ENCODE measurements at regions of chr20 and their contacts with region 1.

Region 1: DNA sequence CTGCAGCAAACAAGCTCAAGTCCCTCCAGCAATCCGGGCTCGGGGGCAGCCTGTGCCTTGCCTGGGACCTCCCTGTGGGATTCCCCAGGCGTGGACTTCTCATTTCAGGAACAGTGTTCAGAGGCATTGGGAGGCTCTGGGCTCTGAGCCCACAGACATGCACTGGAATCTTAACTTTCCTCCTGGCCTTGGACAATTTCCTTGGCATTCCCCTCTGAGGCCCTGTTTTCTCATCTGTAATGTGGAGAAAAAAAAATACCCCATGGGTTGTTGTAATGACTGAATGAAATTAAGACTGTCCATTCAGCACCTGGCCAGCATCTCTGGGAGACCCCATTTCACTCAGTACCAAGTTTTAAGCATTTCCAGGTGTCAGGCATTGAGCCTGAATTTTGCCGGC is 17.6 kb downstream of the BPIFB4 start:
- DNase-seq: no peak
- H3K4me3 ChIP-seq: no peak overlapping the region
- H3K27ac ChIP-seq: no peak overlapping the region
- H3K4me1 ChIP-seq: no peaks in the 10 kb centered on the region
- H3K27me3 ChIP-seq: no peaks in the 10 kb centered on the region
- CTCF ChIP-seq: no peak
- EP300 ChIP-seq: no peak
- POLR2A ChIP-seq: no peak
- RAD21 ChIP-seq: no peak

Region 2: GRCh38 chr20:32902456-32903420 is 194.3 kb before region 1 on chr20:
- CTCF ChIA-PET with region 1: interaction called, 32 read pairs
- POLR2A ChIA-PET with region 1: interaction called, 3 read pairs
- DNase-seq: peak in 1 of 2 experiments; percentile 72
- H3K4me3 ChIP-seq: no peak overlapping the region
- H3K27ac ChIP-seq: no peak overlapping the region
- H3K4me1 ChIP-seq: no peaks in the 10 kb centered on the region
- H3K27me3 ChIP-seq: no peaks in the 10 kb centered on the region
- CTCF ChIP-seq: peak; percentile 93 to 97 (median 95)
- EP300 ChIP-seq: no peak
- POLR2A ChIP-seq: no peak
- RAD21 ChIP-seq: peak; percentile 94 to 95

Region 3: GRCh38 chr20:32988008-32988407 is 109.0 kb before region 1 on chr20:
- CTCF ChIA-PET with region 1: interaction called, 11 read pairs
- POLR2A ChIA-PET with region 1: no interaction called
- DNase-seq: no peak
- H3K4me3 ChIP-seq: no peak overlapping the region
- H3K27ac ChIP-seq: no peak overlapping the region
- H3K4me1 ChIP-seq: no peaks in the 10 kb centered on the region; a peak in 1 of 7 replicates
- H3K27me3 ChIP-seq: no peaks in the 10 kb centered on the region
- CTCF ChIP-seq: no peak
- EP300 ChIP-seq: no peak
- POLR2A ChIP-seq: no peak
- RAD21 ChIP-seq: no peak

Region 4: DNA sequence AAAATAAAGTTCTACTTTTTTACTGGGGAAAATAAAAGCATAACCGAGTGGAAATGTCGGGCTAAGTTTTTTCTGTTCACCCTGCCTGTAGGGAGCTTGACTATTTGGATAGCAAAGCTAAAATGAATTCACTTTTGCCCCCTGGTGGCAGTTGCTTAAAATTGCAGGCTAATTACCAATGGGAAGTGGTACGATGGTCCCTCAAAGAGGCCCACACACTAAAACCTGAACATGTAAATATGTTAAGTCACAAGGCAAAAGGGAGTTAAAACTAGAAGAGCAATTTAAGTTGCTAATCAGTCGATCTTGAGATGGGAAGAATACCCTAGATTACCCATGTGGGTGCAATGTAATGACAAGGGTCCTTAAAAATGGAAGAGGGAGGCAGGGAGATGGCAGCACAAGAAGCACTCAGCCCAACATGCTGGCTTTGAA is 91.9 kb before region 1 on chr20:
- CTCF ChIA-PET with region 1: interaction called, 11 read pairs
- POLR2A ChIA-PET with region 1: no interaction called
- DNase-seq: no peak
- H3K4me3 ChIP-seq: no peak overlapping the region
- H3K27ac ChIP-seq: no peak overlapping the region
- H3K4me1 ChIP-seq: no peaks in the 10 kb centered on the region; a peak in 2 of 7 replicates
- H3K27me3 ChIP-seq: no peaks in the 10 kb centered on the region
- CTCF ChIP-seq: peak in 2 of 3 experiments; percentile 63 to 71; a peak in 3 of 4 replicates
- EP300 ChIP-seq: no peak
- POLR2A ChIP-seq: no peak
- RAD21 ChIP-seq: peak; percentile 60 to 64

Region 5: GRCh38 chr20:33067806-33068205 is 29.2 kb before region 1 on chr20:
- CTCF ChIA-PET with region 1: interaction called, 10 read pairs
- POLR2A ChIA-PET with region 1: no interaction called
- DNase-seq: no peak
- H3K4me3 ChIP-seq: no peak overlapping the region
- H3K27ac ChIP-seq: no peak overlapping the region
- H3K4me1 ChIP-seq: no peaks in the 10 kb centered on the region
- H3K27me3 ChIP-seq: no peaks in the 10 kb centered on the region
- CTCF ChIP-seq: no peak
- EP300 ChIP-seq: no peak
- POLR2A ChIP-seq: no peak
- RAD21 ChIP-seq: no peak

Region 6: GRCh38 chr20:33108661-33109060 is 11.7 kb after region 1 on chr20:
- CTCF ChIA-PET with region 1: interaction called, 11 read pairs
- POLR2A ChIA-PET with region 1: no interaction called
- DNase-seq: no peak
- H3K4me3 ChIP-seq: no peak overlapping the region
- H3K27ac ChIP-seq: no peak overlapping the region
- H3K4me1 ChIP-seq: no peaks in the 10 kb centered on the region
- H3K27me3 ChIP-seq: no peaks in the 10 kb centered on the region
- CTCF ChIP-seq: no peak
- EP300 ChIP-seq: no peak
- POLR2A ChIP-seq: no peak
- RAD21 ChIP-seq: no peak

Region 7: GRCh38 chr20:33211817-33212424 is 114.9 kb after region 1 on chr20:
- CTCF ChIA-PET with region 1: interaction called, 18 read pairs
- POLR2A ChIA-PET with region 1: no interaction called
- DNase-seq: peak; percentile 39 to 64
- H3K4me3 ChIP-seq: no peak overlapping the region
- H3K27ac ChIP-seq: no peak overlapping the region
- H3K4me1 ChIP-seq: 0 out of 7 replicates have a peak, but pooled peaks cover 0 to 2% (median 0%) of the 10 kb centered on the region in 4 experiments
- H3K27me3 ChIP-seq: peaks cover 0 to 3% (median 1%) of the 10 kb centered on the region in 4 experiments; a peak in 4 of 7 replicates
- CTCF ChIP-seq: peak; percentile 72 to 88 (median 87)
- EP300 ChIP-seq: no peak
- POLR2A ChIP-seq: no peak
- RAD21 ChIP-seq: peak; percentile 81 to 85